ENCODE measurements at regions of chr18 and their contacts with region 1.

Region 1: DNA sequence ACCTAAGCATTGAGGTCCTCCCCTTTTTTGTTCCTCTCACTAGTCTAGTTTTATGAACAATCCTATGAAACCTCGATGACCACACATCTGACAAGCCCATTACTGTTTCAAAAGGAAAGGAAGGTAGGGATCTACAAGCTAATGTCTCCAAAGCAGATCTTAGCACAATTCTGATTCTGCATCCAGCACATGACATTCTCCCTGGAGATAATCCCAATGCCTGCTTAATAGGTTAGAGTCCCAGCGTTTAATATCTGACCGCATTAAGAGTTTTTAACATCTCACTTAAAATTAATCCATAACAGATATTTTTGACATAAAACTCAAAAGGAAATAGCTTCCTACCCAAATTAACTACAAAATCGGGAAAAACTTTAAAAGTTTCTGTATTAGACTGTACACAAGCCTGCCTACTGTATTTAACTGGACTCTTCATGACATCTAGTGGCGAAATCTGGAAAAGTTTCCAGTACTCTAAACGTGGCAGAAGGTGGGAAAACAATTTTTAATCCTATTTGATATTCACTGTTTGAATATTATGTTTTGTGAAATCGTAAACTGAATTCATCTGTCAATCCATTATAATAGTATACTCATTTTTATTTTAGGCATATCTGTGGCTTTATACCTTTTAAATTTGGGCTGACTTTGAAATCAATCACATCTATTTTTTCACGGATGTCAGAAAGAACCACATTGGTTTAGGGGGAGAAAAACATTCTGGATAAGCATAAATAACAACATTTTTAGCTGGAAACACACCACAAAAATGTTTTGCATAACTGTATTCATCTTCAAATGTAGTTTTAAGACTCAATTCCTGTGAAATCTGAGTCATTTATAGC is 62.4 kb downstream of the TXNL1 start:
- DNase-seq: peak; percentile 33 to 70 (median 54)
- H3K4me3 ChIP-seq: no peak overlapping the region
- H3K4me3 Mint-ChIP-seq: no peak overlapping the region
- H3K27ac ChIP-seq: no peak overlapping the region
- H3K27ac Mint-ChIP-seq: no peak overlapping the region
- H3K4me1 ChIP-seq: peaks cover 18 to 24% of the 10 kb centered on the region in 2 donors
- H3K4me1 Mint-ChIP-seq: peaks cover 36% of the 10 kb centered on the region
- H3K27me3 ChIP-seq: no peaks in the 10 kb centered on the region
- H3K27me3 Mint-ChIP-seq: peaks cover 0 to 2% (median 0%) of the 10 kb centered on the region in 3 donors
- CTCF ChIP-seq: peak; percentile 88

Region 2: GRCh38 chr18:55234366-55235093 is 1341.5 kb before region 1 on chr18:
- intact Hi-C with region 1: loop called in 1 of 2 experiments (anchors 5 kb)
- DNase-seq: peak; percentile 54 to 68 (median 58)
- H3K4me3 ChIP-seq: no peak overlapping the region
- H3K4me3 Mint-ChIP-seq: no peak overlapping the region
- H3K27ac ChIP-seq: no peak overlapping the region
- H3K27ac Mint-ChIP-seq: peak overlapping the region in 5 of 7 donors; percentile 12 to 58 (median 30)
- H3K4me1 ChIP-seq: peaks cover 10 to 22% of the 10 kb centered on the region in 2 donors
- H3K4me1 Mint-ChIP-seq: peaks cover 18% of the 10 kb centered on the region
- H3K27me3 ChIP-seq: no peaks in the 10 kb centered on the region
- H3K27me3 Mint-ChIP-seq: no peaks in the 10 kb centered on the region
- CTCF ChIP-seq: peak; percentile 81

Region 3: DNA sequence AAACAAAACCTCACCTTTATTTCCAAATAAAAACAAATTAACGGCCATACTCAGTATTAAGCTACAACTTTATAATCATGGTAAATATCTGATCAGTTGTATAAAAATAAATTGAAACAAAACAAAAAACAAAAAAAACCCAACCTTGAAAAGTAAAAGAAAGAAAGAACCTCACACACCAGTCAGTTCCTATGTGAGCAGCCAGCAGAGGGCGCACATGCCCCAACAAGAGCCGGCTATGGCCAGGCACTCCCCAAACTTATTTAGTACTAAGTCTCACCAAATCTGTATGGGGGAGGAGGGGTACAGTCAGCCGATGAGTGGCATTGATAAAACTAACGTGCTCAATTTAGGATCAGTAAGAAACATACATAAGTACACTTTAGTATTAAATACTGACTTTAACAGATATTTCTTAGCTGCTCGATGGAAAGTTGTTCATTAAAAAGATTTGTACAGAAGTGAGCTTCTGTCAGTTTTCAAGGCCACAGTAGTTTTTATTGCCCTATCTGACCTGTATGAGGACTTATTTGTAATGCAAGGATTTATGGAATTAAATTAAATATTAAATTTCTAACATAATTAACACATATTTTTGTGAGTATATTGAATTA is 1160.7 kb before region 1 on chr18:
- intact Hi-C with region 1: loop called (anchors 5 kb)
- DNase-seq: peak; percentile 68 to 74 (median 71)
- H3K4me3 ChIP-seq: no peak overlapping the region
- H3K4me3 Mint-ChIP-seq: no peak overlapping the region
- H3K27ac ChIP-seq: no peak overlapping the region
- H3K27ac Mint-ChIP-seq: no peak overlapping the region
- H3K4me1 ChIP-seq: peaks cover 3 to 4% of the 10 kb centered on the region in 2 donors
- H3K4me1 Mint-ChIP-seq: peaks cover 16% of the 10 kb centered on the region
- H3K27me3 ChIP-seq: no peaks in the 10 kb centered on the region
- H3K27me3 Mint-ChIP-seq: peaks cover 0 to 3% (median 0%) of the 10 kb centered on the region in 3 donors
- CTCF ChIP-seq: peak; percentile 86

Region 4: DNA sequence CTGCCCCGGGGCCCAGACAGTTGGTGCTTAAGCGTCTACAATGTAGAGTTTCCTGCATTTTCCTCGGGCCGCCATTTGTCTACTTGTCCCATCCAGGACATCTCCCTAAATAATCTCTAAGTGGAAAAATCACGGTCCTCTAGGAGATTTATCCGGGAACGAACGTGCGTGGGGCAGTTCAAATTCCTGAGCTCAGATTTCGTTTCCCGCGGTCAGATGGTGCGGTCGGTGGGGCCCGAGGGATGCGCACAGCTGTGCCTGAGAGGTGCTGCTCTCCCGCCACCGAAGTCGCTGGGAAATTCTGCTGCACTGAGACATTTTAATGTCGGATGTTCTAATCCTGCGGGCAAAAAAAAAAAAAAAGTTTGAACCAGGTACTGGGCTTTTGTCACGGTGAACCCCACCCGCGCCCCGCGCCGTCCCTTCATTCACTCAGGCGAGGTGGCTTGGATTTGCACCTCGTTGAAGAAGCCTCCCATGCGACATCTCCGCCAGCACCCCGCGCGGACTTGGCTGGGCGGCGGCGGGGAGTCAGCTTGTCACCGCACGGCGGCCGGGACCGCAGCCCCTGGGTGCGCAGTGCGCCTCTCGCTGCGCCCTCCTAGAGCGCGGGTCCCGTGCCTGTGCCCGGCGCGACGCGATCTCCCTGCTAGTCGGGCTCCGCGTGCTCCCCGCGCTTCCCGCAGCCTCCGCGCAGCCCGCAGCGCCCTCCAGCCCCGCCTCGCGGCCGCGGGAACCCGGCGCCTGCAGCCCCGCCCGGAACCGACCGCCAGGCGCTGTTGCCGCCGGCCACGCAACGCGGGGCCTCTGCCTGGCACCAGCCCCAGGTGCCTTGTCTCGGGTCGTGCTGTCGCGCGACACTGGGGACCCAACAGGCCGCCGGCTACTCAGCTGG is 796.1 kb before region 1 on chr18:
- intact Hi-C with region 1: loop called in 1 of 2 experiments (anchors 10 kb)
- DNase-seq: peak in 2 of 3 donors; percentile 18 to 36
- H3K4me3 ChIP-seq: peak overlapping the region; percentile 85 to 99 (median 91)
- H3K4me3 Mint-ChIP-seq: peak overlapping the region; percentile 90
- H3K27ac ChIP-seq: peak overlapping the region in 1 of 2 donors; percentile 78
- H3K27ac Mint-ChIP-seq: peak overlapping the region in 5 of 7 donors; percentile 11 to 80 (median 49)
- H3K4me1 ChIP-seq: peaks cover 15 to 18% of the 10 kb centered on the region in 2 donors
- H3K4me1 Mint-ChIP-seq: peaks cover 20% of the 10 kb centered on the region
- H3K27me3 ChIP-seq: peaks cover 8 to 24% of the 10 kb centered on the region in 2 donors
- H3K27me3 Mint-ChIP-seq: peaks cover 13 to 23% (median 18%) of the 10 kb centered on the region in 3 donors
- CTCF ChIP-seq: no peak

Region 5: GRCh38 chr18:56458770-56459712 is 117.0 kb before region 1 on chr18:
- intact Hi-C with region 1: no loop called
- DNase-seq: no peak
- H3K4me3 ChIP-seq: no peak overlapping the region
- H3K4me3 Mint-ChIP-seq: no peak overlapping the region
- H3K27ac ChIP-seq: peak overlapping the region in 1 of 2 donors; percentile 17
- H3K27ac Mint-ChIP-seq: peak overlapping the region in 3 of 7 donors; percentile 10 to 71 (median 18)
- H3K4me1 ChIP-seq: peaks cover 40 to 42% of the 10 kb centered on the region in 2 donors
- H3K4me1 Mint-ChIP-seq: peaks cover 37% of the 10 kb centered on the region
- H3K27me3 ChIP-seq: no peaks in the 10 kb centered on the region
- H3K27me3 Mint-ChIP-seq: peaks cover 0 to 3% (median 0%) of the 10 kb centered on the region in 3 donors
- CTCF ChIP-seq: no peak